Posterior cingulate gyrus (tissue), 11 donors: ENCODE measurements at regions of chr19 and their contacts with region 1.

Region 1: DNA sequence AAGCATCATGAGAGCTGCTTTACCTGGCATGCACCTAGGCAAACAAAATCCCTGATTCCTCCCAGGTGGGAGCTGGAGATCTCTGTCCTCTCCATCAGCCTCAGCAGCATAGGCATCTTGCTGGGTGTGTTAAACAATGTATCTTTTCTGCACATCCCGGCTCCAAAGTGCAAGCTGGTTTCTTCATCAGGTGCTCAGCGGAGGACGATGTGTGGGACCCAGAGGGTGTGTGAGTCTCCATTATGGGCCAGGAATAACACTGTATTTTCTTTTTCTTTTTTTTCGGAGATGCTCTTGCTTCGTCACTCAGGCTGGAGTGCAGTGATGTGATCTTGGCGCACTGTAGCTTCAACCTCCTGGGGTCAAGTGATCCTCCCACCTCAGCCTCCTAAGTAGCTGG is 9.9 kb downstream of the CNFN start:
- DNase-seq: no peak

Region 2: GRCh38 chr19:42343344-42344110 is 36.6 kb before region 1 on chr19:
- intact Hi-C with region 1: loop called (anchors 5 kb)
- DNase-seq: no peak